Activated CD8-positive, alpha-beta T cell treated with anti-CD3 and anti-CD28 coated beads for 36 hours (primary cell): ENCODE measurements at regions of chr1 and their contacts with region 1.

Region 1: GRCh38 chr1:29202584-29203340 is 21.1 kb upstream of the SRSF4 start:
- DNase-seq: peak; percentile 97
- ATAC-seq: peak; percentile 97
- H3K4me3 Mint-ChIP-seq: no peak overlapping the region
- H3K27ac Mint-ChIP-seq: peak overlapping the region; percentile 21
- H3K4me1 Mint-ChIP-seq: peaks cover 15% of the 10 kb centered on the region
- H3K27me3 Mint-ChIP-seq: no peaks in the 10 kb centered on the region
- CTCF ChIP-seq: peak; percentile 93

Region 2: DNA sequence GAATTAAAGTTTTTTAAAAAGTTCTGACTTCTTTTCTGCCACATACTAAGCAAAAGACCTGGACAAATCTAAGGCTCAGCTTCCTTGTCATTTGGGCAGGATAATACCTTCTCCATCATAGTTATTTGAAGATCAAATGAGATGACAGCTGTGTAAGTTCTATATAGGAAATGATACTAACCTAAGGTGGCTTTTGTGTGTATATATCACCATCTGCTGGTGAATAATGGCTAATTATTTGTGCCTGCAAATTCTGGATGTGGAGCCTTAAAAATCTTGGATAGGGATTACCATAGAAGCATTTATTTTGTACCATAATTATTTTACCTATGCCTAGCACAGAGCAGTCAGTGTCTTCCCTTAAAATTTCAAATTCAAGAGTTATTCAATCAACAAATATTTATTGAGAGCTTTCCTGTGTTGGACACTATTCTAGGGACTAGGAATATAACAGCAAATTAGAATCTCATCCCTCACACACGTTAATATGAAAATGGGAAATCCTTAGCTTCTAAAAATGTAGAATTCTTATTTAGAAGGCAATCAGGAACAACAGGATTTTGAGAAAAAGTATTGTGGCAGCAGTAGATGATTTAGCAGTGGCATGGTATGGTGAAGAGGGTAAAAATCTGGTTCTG is 168.8 kb before region 1 on chr1:
- CTCF ChIA-PET with region 1: interaction called, 14 read pairs
- POLR2A ChIA-PET with region 1: no interaction called
- intact Hi-C with region 1: no loop called
- DNase-seq: no peak
- ATAC-seq: peak; percentile 51
- H3K4me3 Mint-ChIP-seq: no peak overlapping the region
- H3K27ac Mint-ChIP-seq: peak overlapping the region; percentile 64
- H3K4me1 Mint-ChIP-seq: peaks cover 2% of the 10 kb centered on the region
- H3K27me3 Mint-ChIP-seq: no peaks in the 10 kb centered on the region
- CTCF ChIP-seq: peak; percentile 78

Region 3: GRCh38 chr1:29124366-29125236 is 78.2 kb before region 1 on chr1:
- CTCF ChIA-PET with region 1: interaction called, 14 read pairs
- POLR2A ChIA-PET with region 1: no interaction called
- intact Hi-C with region 1: no loop called
- DNase-seq: peak; percentile 86
- ATAC-seq: peak; percentile 68
- H3K4me3 Mint-ChIP-seq: peak overlapping the region; percentile 73
- H3K27ac Mint-ChIP-seq: no peak overlapping the region
- H3K4me1 Mint-ChIP-seq: no peaks in the 10 kb centered on the region
- H3K27me3 Mint-ChIP-seq: peaks cover 21% of the 10 kb centered on the region
- CTCF ChIP-seq: no peak

Region 4: GRCh38 chr1:29171089-29171488 is 31.7 kb before region 1 on chr1:
- CTCF ChIA-PET with region 1: interaction called, 12 read pairs
- POLR2A ChIA-PET with region 1: no interaction called
- intact Hi-C with region 1: no loop called
- DNase-seq: no peak
- ATAC-seq: no peak
- H3K4me3 Mint-ChIP-seq: no peak overlapping the region
- H3K27ac Mint-ChIP-seq: peak overlapping the region; percentile 76
- H3K4me1 Mint-ChIP-seq: peaks cover 56% of the 10 kb centered on the region
- H3K27me3 Mint-ChIP-seq: no peaks in the 10 kb centered on the region
- CTCF ChIP-seq: no peak

Region 5: DNA sequence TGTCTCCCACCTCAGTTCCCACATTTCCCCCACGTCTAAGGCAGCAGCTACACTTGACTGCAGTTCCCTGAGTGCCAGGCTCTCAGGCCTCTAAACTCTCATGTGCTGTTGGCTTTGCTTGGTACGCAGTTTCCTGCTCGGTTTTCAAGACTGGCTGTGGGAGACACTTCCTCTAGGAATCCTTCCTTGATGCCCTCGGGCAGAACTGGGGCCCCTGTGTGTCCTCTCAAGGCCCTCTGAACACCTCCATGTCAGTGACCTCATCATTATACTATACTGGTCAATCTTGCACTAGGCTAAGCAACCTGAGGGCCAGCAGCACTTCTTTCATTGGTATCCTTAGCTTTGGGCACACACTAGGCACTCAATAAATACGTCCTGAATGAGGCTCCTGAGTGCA is 10.5 kb before region 1 on chr1:
- CTCF ChIA-PET with region 1: interaction called, 17 read pairs
- POLR2A ChIA-PET with region 1: no interaction called
- intact Hi-C with region 1: no loop called
- DNase-seq: no peak
- ATAC-seq: no peak
- H3K4me3 Mint-ChIP-seq: no peak overlapping the region
- H3K27ac Mint-ChIP-seq: no peak overlapping the region
- H3K4me1 Mint-ChIP-seq: no peaks in the 10 kb centered on the region
- H3K27me3 Mint-ChIP-seq: no peaks in the 10 kb centered on the region
- CTCF ChIP-seq: no peak

Region 6: GRCh38 chr1:29230553-29231378 is 28.0 kb after region 1 on chr1 and contains the start of gene MECR:
- CTCF ChIA-PET with region 1: interaction called, 11 read pairs
- POLR2A ChIA-PET with region 1: interaction called, 7 read pairs
- intact Hi-C with region 1: no loop called
- DNase-seq: peak; percentile 96
- ATAC-seq: peak; percentile 98
- H3K4me3 Mint-ChIP-seq: peak within 1 kb of the TSS; percentile 97
- H3K27ac Mint-ChIP-seq: peak within 1 kb of the TSS; percentile 89
- H3K4me1 Mint-ChIP-seq: peaks cover 21% of the 10 kb centered on the region
- H3K27me3 Mint-ChIP-seq: peaks cover 3% of the 10 kb centered on the region
- CTCF ChIP-seq: no peak
- total RNA-seq, gene MECR: 42.2 to 43.5 TPM